ENCODE measurements at regions of chr11 and their contacts with region 1.

Region 1: GRCh38 chr11:102293873-102294601 is 23.2 kb upstream of the BIRC3 start:
- DNase-seq: no peak
- ATAC-seq: peak in 3 of 8 donors; percentile 55 to 73 (median 72)
- H3K4me3 ChIP-seq: peak overlapping the region in 1 of 10 donors; percentile 23
- H3K27ac ChIP-seq: no peak overlapping the region
- H3K4me1 ChIP-seq: peaks cover 0 to 10% (median 0%) of the 10 kb centered on the region in 9 donors
- H3K27me3 ChIP-seq: no peaks in the 10 kb centered on the region
- CTCF ChIP-seq: peak; percentile 23 to 77 (median 60)

Region 2: DNA sequence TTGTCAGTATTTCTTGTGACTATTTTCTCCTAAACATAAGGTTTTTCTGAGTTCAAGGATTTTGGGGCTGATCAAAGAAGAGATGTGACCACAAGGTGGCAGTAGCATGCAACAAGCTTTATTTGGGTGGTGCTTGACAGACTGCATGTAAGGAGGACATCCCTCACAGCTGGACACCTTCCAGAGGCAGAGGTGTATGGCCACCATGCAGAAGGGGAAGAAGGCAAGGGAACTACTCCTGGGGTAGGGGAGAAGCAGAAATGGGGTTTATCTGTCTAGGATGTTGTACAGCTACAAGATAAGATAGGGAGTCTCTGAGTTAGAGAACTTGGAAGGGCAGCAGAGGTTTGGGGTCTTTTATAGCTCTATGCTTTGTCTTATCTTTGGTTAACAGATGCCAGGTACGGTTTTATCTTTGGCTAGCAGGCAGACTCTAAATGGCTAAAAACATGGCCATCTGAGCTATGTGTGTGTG is 47.8 kb after region 1 on chr11:
- intact Hi-C with region 1: loop called in 6 of 10 experiments (anchors 2 to 10 kb)
- DNase-seq: peak; percentile 24 to 82
- ATAC-seq: peak; percentile 43 to 74 (median 63)
- H3K4me3 ChIP-seq: no peak overlapping the region
- H3K27ac ChIP-seq: no peak overlapping the region
- H3K4me1 ChIP-seq: peaks cover 0 to 12% (median 8%) of the 10 kb centered on the region in 9 donors
- H3K27me3 ChIP-seq: no peaks in the 10 kb centered on the region
- CTCF ChIP-seq: peak; percentile 58 to 88 (median 83)

Measured in heart right ventricle (tissue), 16 donors.